GM12878 (cell line): ENCODE measurements at regions of chr7 and their contacts with region 1.

Region 1: GRCh38 chr7:135274495-135275268 is 41.0 kb downstream of the STRA8 start:
- DNase-seq: peak; percentile 45
- ATAC-seq: peak; percentile 98
- H3K4me3 ChIP-seq: no peak overlapping the region
- H3K27ac ChIP-seq: no peak overlapping the region
- H3K4me1 ChIP-seq: no peaks in the 10 kb centered on the region
- H3K27me3 ChIP-seq: no peaks in the 10 kb centered on the region
- CTCF ChIP-seq: peak; percentile 75 to 86 (median 81); a peak in 5 of 6 replicates
- EP300 ChIP-seq: no peak
- POLR2A ChIP-seq: no peak
- RAD21 ChIP-seq: peak; percentile 81

Region 2: GRCh38 chr7:135170274-135170997 is 104.2 kb before region 1 on chr7 and contains the start of gene CYREN:
- CTCF ChIA-PET with region 1: interaction called, 11 read pairs
- POLR2A ChIA-PET with region 1: no interaction called
- RAD21 ChIA-PET with region 1: interaction called, 7 read pairs
- SMC1A ChIA-PET with region 1: interaction called, 12 read pairs
- in situ Hi-C with region 1: no loop called
- intact Hi-C with region 1: no loop called
- DNase-seq: no peak
- ATAC-seq: peak; percentile 78
- H3K4me3 ChIP-seq: peak within 1 kb of the TSS; percentile 84
- H3K27ac ChIP-seq: peak within 1 kb of the TSS; percentile 96
- H3K4me1 ChIP-seq: peaks cover 24% of the 10 kb centered on the region
- H3K27me3 ChIP-seq: no peaks in the 10 kb centered on the region
- CTCF ChIP-seq: peak; percentile 69 to 88 (median 70)
- EP300 ChIP-seq: no peak; a peak in 1 of 4 replicates
- POLR2A ChIP-seq: peak; percentile 88; the same call in 1 of the 2 replicates
- RAD21 ChIP-seq: peak; percentile 74
- polyA plus RNA-seq, gene CYREN: 8.7 to 12.9 TPM

Region 3: GRCh38 chr7:135186841-135187253 is 87.8 kb before region 1 on chr7:
- CTCF ChIA-PET with region 1: interaction called, 11 read pairs
- POLR2A ChIA-PET with region 1: interaction called, 8 read pairs
- RAD21 ChIA-PET with region 1: interaction called, 29 read pairs
- SMC1A ChIA-PET with region 1: interaction called, 11 read pairs
- in situ Hi-C with region 1: no loop called
- intact Hi-C with region 1: loop called (anchors 5 kb)
- DNase-seq: no peak
- ATAC-seq: peak; percentile 77
- H3K4me3 ChIP-seq: peak overlapping the region; percentile 25; the same call in 1 of the 2 replicates
- H3K27ac ChIP-seq: peak overlapping the region; percentile 58
- H3K4me1 ChIP-seq: peaks cover 33% of the 10 kb centered on the region
- H3K27me3 ChIP-seq: no peaks in the 10 kb centered on the region
- CTCF ChIP-seq: peak in 1 of 3 experiments; percentile 24; a peak in 1 of 6 replicates
- EP300 ChIP-seq: peak; percentile 94 to 95; a peak in 3 of 4 replicates
- POLR2A ChIP-seq: peak; percentile 65
- RAD21 ChIP-seq: peak; percentile 27; the same call in 1 of the 2 replicates

Region 4: GRCh38 chr7:135238112-135238744 is 36.5 kb before region 1 on chr7:
- CTCF ChIA-PET with region 1: interaction called, 14 read pairs
- POLR2A ChIA-PET with region 1: no interaction called
- RAD21 ChIA-PET with region 1: interaction called, 11 read pairs
- SMC1A ChIA-PET with region 1: interaction called, 9 read pairs
- in situ Hi-C with region 1: no loop called
- intact Hi-C with region 1: no loop called
- DNase-seq: no peak
- ATAC-seq: peak; percentile 30; the same call in 2 of the 3 replicates
- H3K4me3 ChIP-seq: no peak overlapping the region
- H3K27ac ChIP-seq: no peak overlapping the region
- H3K4me1 ChIP-seq: peaks cover 14% of the 10 kb centered on the region
- H3K27me3 ChIP-seq: no peaks in the 10 kb centered on the region
- CTCF ChIP-seq: peak in 2 of 3 experiments; percentile 49 to 56; a peak in 4 of 6 replicates
- EP300 ChIP-seq: no peak
- POLR2A ChIP-seq: no peak
- RAD21 ChIP-seq: no peak

Region 5: GRCh38 chr7:135260930-135261721 is 13.6 kb before region 1 on chr7:
- CTCF ChIA-PET with region 1: interaction called, 72 read pairs
- POLR2A ChIA-PET with region 1: interaction called, 3 read pairs
- RAD21 ChIA-PET with region 1: interaction called, 10 read pairs
- SMC1A ChIA-PET with region 1: interaction called, 4 read pairs
- in situ Hi-C with region 1: no loop called
- intact Hi-C with region 1: no loop called
- DNase-seq: no peak
- ATAC-seq: no peak
- H3K4me3 ChIP-seq: no peak overlapping the region
- H3K27ac ChIP-seq: no peak overlapping the region
- H3K4me1 ChIP-seq: no peaks in the 10 kb centered on the region
- H3K27me3 ChIP-seq: no peaks in the 10 kb centered on the region
- CTCF ChIP-seq: no peak
- EP300 ChIP-seq: no peak
- POLR2A ChIP-seq: no peak
- RAD21 ChIP-seq: no peak

Region 6: DNA sequence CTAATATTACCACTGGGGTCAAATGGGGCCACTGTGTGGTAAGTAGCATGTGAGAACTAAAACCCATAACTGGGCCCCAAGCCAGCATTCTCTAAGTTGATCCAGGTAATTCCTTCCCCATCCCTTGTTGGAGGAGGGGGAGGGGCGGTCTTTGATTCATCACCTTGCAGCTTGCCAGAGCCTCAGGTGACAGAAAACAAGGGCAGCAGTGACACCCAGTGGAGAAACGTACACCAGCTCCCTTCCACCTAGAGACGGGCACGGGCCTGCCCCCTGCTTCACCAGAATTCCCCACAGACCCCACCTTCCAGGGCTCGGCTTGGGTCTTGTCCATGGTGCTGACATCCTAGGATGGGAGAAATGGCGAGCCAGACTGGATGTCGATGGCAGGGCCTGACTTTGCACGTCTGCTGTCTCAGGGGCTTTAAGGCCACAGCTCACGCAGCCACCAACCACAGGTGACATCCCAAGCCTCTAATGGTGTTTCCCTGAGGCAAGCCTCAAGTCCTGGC is 61.0 kb after region 1 on chr7:
- CTCF ChIA-PET with region 1: interaction called, 105 read pairs
- POLR2A ChIA-PET with region 1: no interaction called
- RAD21 ChIA-PET with region 1: interaction called, 36 read pairs
- SMC1A ChIA-PET with region 1: interaction called, 47 read pairs
- in situ Hi-C with region 1: no loop called
- intact Hi-C with region 1: no loop called
- DNase-seq: peak; percentile 20
- ATAC-seq: peak; percentile 96
- H3K4me3 ChIP-seq: no peak overlapping the region
- H3K27ac ChIP-seq: no peak overlapping the region
- H3K4me1 ChIP-seq: no peaks in the 10 kb centered on the region
- H3K27me3 ChIP-seq: no peaks in the 10 kb centered on the region; a peak in 1 of 4 replicates
- CTCF ChIP-seq: peak; percentile 46 to 75 (median 64); a peak in 5 of 6 replicates
- EP300 ChIP-seq: no peak
- POLR2A ChIP-seq: no peak
- RAD21 ChIP-seq: peak; percentile 73